CD4-positive, alpha-beta T cell (primary cell): ENCODE measurements at regions of chr6 and their contacts with region 1.

Region 1: DNA sequence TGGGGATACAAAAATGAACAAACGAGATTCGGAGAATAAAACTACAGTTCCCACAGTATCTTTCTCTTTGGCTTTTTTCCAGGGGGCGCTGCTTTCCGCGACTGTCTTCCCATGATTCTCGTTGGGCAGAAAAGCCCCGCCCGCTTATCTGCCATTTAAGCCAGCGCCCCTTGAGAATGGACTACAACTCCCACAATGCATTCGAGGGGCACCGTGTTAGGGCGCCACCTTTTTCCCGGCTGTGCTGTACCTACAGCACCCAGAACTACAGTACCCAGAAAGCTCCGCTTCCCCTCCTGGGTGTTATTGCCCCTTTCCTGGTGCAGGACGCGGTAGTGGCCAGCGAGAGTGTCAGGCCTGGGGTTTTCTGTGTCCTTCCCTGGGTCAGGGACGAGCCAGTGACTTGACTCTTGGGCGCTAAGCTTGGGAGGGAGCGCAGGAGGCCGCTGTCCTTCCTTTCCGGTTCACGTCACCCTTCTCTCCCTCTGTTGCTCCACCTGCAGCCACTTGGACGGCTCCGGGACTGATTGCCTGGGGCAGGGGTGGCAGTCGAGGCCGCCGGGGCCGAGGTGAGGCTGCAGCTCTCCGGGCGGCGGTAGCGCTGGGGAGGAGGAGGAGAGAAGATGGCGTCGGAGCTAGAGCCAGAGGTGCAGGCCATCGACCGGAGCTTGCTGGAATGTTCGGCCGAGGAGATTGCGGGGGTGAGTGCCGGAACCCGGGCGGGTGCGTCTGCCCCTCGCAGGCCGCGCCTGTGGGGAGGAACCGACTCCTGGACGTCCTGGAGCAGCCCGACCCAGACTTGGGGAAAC is at the start of gene UBR2:
- DNase-seq: peak; percentile 81 to 98 (median 90)
- ATAC-seq: peak; percentile 95
- H3K4me3 ChIP-seq: peak within 1 kb of the TSS; percentile 99
- H3K4me3 Mint-ChIP-seq: peak within 1 kb of the TSS; percentile 98
- H3K27ac ChIP-seq: peak within 1 kb of the TSS; percentile 87 to 93
- H3K27ac Mint-ChIP-seq: peak within 1 kb of the TSS; percentile 98
- H3K4me1 ChIP-seq: peaks cover 16% of the 10 kb centered on the region
- H3K4me1 Mint-ChIP-seq: peaks cover 38% of the 10 kb centered on the region
- H3K27me3 ChIP-seq: no peaks in the 10 kb centered on the region
- H3K27me3 Mint-ChIP-seq: no peaks in the 10 kb centered on the region
- CTCF ChIP-seq: peak; percentile 52
- total RNA-seq, gene UBR2: 27.4 to 27.7 TPM

Region 2: DNA sequence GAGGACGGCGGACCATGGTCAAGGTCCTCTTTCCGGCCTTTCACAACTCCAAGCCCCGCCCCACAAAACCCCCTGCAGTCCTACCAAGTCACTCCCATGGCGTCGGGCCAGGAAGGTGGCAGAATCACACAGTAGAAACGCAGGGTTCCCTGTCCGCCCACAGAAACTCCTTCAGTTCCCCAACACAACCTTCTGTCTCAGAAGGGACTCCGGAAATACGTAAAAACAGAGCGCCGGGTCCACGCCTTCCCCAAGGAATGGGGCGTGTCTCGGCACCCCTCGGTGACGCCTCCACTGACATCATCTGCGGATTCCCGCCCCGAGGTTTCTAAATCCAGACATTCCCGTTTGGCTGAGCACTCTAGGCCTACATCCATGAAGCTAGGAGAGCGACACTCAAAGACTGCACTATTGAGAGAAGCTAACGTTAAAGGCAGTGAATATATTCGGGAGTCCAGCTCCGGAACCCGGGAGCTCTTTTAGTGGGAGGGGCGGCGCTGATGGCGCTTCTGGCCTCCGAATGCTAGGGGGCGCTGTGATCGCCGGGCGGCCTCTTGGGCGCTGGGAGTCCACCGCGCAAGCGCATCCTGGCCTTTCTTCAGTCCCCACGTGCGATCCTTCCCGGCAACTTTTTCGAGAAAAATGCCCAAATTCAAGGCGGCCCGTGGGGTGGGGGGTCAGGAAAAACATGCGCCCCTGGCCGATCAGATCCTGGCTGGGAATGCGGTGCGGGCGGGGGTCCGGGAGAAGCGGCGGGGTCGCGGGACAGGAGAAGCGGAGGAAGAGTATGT is 642.8 kb before region 1 on chr6 and contains the starts of genes BYSL and MED20:
- CTCF ChIA-PET with region 1: no interaction called
- POLR2A ChIA-PET with region 1: no interaction called
- intact Hi-C with region 1: loop called in 1 of 2 experiments (anchors 2 kb)
- DNase-seq: peak; percentile 89 to 97 (median 93)
- ATAC-seq: peak; percentile 90
- H3K4me3 ChIP-seq: peak within 1 kb of the TSS; percentile 78
- H3K4me3 Mint-ChIP-seq: peak within 1 kb of the TSS; percentile 99
- H3K27ac ChIP-seq: peak within 1 kb of the TSS; percentile 97 to 98
- H3K27ac Mint-ChIP-seq: peak within 1 kb of the TSS; percentile 94
- H3K4me1 ChIP-seq: peaks cover 31% of the 10 kb centered on the region
- H3K4me1 Mint-ChIP-seq: peaks cover 55% of the 10 kb centered on the region
- H3K27me3 ChIP-seq: no peaks in the 10 kb centered on the region
- H3K27me3 Mint-ChIP-seq: no peaks in the 10 kb centered on the region
- CTCF ChIP-seq: peak; percentile 97
- total RNA-seq, gene BYSL: 1.2 to 1.6 TPM
- total RNA-seq, gene MED20: 1.3 to 1.6 TPM

Region 3: DNA sequence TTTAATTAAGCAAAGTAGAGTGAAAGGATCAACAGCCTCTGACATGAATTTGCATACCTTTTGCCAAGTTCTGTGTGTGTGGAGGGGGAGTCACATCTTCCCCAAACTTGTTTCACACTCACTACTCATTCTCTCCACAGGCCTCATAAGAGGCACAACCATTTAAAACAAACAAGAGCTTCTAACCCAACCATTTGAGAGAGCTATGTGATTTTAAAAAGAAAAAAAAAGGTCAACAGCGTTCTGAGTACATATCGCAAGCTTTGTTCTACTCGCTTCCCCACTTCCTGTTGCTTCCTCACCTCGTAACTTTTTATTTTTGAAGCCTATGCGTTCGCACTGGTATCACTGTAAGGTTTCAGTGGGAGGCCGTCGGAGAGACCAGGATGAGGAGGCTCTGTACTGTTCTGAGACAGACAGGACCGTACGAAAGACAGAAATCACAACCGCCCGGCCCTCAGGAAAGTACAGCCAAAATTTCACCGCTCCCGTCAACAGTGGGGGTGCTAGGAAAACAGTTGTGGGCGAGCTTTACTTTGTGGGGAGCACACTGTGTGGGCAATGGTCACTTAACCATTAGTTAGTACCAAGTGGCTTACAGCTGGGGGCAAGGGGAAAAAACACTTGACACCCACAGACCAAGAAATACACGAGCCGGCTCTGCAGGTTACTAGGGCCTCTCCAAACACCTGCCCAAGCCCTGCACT is 173.5 kb before region 1 on chr6:
- CTCF ChIA-PET with region 1: no interaction called
- POLR2A ChIA-PET with region 1: interaction called, 21 read pairs
- intact Hi-C with region 1: no loop called
- DNase-seq: peak in 13 of 14 experiments; percentile 26 to 87 (median 48)
- ATAC-seq: peak; percentile 80
- H3K4me3 ChIP-seq: peak overlapping the region; percentile 35
- H3K4me3 Mint-ChIP-seq: peak overlapping the region; percentile 73
- H3K27ac ChIP-seq: peak overlapping the region; percentile 78 to 89
- H3K27ac Mint-ChIP-seq: peak overlapping the region; percentile 99
- H3K4me1 ChIP-seq: peaks cover 94% of the 10 kb centered on the region
- H3K4me1 Mint-ChIP-seq: peaks cover 98% of the 10 kb centered on the region
- H3K27me3 ChIP-seq: no peaks in the 10 kb centered on the region
- H3K27me3 Mint-ChIP-seq: no peaks in the 10 kb centered on the region
- CTCF ChIP-seq: no peak

Region 4: GRCh38 chr6:42652024-42652746 is 88.3 kb after region 1 on chr6:
- CTCF ChIA-PET with region 1: no interaction called
- POLR2A ChIA-PET with region 1: no interaction called
- intact Hi-C with region 1: no loop called
- DNase-seq: no peak
- ATAC-seq: no peak
- H3K4me3 ChIP-seq: no peak overlapping the region
- H3K4me3 Mint-ChIP-seq: no peak overlapping the region
- H3K27ac ChIP-seq: no peak overlapping the region
- H3K27ac Mint-ChIP-seq: no peak overlapping the region
- H3K4me1 ChIP-seq: no peaks in the 10 kb centered on the region
- H3K4me1 Mint-ChIP-seq: no peaks in the 10 kb centered on the region
- H3K27me3 ChIP-seq: no peaks in the 10 kb centered on the region
- H3K27me3 Mint-ChIP-seq: no peaks in the 10 kb centered on the region
- CTCF ChIP-seq: no peak

Region 5: DNA sequence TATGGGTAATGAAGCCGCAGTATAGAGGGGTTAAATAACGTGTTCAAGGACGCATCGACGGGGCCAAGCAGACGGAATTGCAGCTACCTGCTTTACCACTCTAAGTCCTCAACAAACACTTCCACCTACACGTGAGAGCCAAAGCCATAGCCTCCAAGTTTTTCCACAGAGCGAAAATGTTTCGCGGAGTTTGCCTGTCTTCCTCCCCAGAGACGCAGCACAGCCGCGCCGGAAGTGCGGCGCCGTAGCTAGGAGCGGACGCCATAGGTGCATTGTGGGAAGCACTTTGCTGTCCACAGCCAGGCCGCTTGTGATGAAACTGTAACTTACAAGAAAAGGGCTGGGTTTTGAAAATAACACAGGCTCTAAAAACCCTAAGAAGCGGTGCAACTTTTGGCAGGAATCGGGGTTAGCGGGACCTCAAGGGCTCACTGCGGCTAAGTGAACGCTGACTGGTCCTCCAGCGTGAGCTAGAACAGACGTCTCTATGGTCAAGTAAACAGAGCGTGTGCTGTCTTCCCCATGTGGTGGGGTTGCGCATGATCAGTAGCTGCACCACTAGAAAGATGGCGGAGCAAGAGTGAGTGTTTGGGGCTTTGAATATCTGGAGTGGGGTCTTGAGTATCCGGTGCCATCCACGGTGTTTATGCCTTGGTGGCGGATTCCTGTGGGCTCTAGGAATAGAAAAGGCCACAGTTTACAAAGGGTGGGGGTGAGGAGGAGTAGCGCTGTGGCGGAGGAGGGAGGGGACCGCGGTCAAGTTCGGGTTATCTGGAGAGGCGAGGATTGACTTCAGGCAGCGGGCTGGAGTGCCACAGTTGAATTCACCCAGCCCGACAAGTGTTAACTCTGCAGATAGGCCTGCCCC is 315.7 kb after region 1 on chr6 and contains the start of gene RPL7L1:
- CTCF ChIA-PET with region 1: no interaction called
- POLR2A ChIA-PET with region 1: interaction called, 11 read pairs
- intact Hi-C with region 1: no loop called
- DNase-seq: peak; percentile 68 to 93 (median 79)
- ATAC-seq: peak; percentile 92
- H3K4me3 ChIP-seq: peak within 1 kb of the TSS; percentile 69
- H3K4me3 Mint-ChIP-seq: peak within 1 kb of the TSS; percentile 93
- H3K27ac ChIP-seq: peak within 1 kb of the TSS; percentile 94 to 95
- H3K27ac Mint-ChIP-seq: peak within 1 kb of the TSS; percentile 97
- H3K4me1 ChIP-seq: peaks cover 41% of the 10 kb centered on the region
- H3K4me1 Mint-ChIP-seq: peaks cover 23% of the 10 kb centered on the region
- H3K27me3 ChIP-seq: no peaks in the 10 kb centered on the region
- H3K27me3 Mint-ChIP-seq: no peaks in the 10 kb centered on the region
- CTCF ChIP-seq: no peak
- total RNA-seq, gene RPL7L1: 76.1 TPM

Region 6: DNA sequence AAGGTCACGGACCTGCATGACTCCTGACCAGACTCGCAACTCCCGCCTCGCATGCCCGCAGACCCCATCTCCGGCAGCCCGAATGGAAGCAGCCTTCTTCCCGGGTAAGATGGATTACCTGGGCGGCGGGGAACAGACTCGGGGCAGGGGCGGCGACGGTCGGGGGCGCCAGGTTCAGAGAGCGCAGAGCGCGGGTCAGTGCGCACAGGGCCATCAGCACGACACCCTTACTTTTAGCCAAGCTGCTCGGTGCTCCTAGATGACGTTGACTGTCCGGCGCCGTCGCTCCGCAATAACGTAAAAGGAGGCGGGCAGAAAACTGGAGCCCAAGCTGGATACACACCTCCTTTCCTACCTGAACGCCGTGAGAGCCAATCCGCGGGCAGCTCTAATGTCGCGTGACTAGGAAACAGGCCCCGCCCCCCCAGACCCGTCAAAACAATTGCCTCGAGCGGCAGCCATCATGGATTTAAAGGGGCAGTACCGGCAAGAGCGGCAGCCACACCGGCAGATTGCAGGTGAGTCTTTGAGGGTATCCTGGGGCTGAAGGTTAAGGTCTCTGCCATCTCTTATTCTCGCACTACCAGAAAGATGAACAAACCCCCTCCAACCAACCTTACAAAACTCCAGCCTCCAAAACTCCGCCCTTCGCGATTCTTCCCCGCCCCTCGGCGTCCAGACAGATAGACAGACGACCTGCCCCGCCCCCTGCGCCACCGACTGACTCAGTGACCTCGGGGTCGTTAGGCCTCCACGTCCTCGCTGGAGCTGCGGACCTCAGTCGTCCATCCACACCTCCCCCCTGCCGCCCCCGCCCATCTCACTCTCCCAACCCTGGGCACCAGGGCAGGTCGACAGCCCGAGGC is 495.5 kb after region 1 on chr6 and contains the starts of genes KLC4 and MRPL2:
- CTCF ChIA-PET with region 1: no interaction called
- POLR2A ChIA-PET with region 1: no interaction called
- intact Hi-C with region 1: loop called in 1 of 2 experiments (anchors 2 kb)
- DNase-seq: peak; percentile 94 to 99 (median 97)
- ATAC-seq: peak; percentile 97
- H3K4me3 ChIP-seq: peak within 1 kb of the TSS; percentile 89
- H3K4me3 Mint-ChIP-seq: peak within 1 kb of the TSS; percentile 91
- H3K27ac ChIP-seq: peak within 1 kb of the TSS; percentile 85 to 95
- H3K27ac Mint-ChIP-seq: peak within 1 kb of the TSS; percentile 96
- H3K4me1 ChIP-seq: peaks cover 29% of the 10 kb centered on the region
- H3K4me1 Mint-ChIP-seq: peaks cover 50% of the 10 kb centered on the region
- H3K27me3 ChIP-seq: no peaks in the 10 kb centered on the region
- H3K27me3 Mint-ChIP-seq: no peaks in the 10 kb centered on the region
- CTCF ChIP-seq: no peak
- total RNA-seq, gene KLC4: 39.6 to 40.8 TPM
- total RNA-seq, gene MRPL2: 42.8 to 48.0 TPM

Region 7: GRCh38 chr6:43436577-43437282 is 872.8 kb after region 1 on chr6:
- CTCF ChIA-PET with region 1: no interaction called
- POLR2A ChIA-PET with region 1: no interaction called
- intact Hi-C with region 1: no loop called
- DNase-seq: peak in 1 of 14 experiments; percentile 2
- ATAC-seq: no peak
- H3K4me3 ChIP-seq: no peak overlapping the region
- H3K4me3 Mint-ChIP-seq: no peak overlapping the region
- H3K27ac ChIP-seq: no peak overlapping the region
- H3K27ac Mint-ChIP-seq: no peak overlapping the region
- H3K4me1 ChIP-seq: peaks cover 3% of the 10 kb centered on the region
- H3K4me1 Mint-ChIP-seq: peaks cover 1% of the 10 kb centered on the region
- H3K27me3 ChIP-seq: no peaks in the 10 kb centered on the region
- H3K27me3 Mint-ChIP-seq: no peaks in the 10 kb centered on the region
- CTCF ChIP-seq: no peak